Naive thymus-derived CD4-positive, alpha-beta T cell (primary cell): ENCODE measurements at regions of chr17 and their contacts with region 1.

Region 1: DNA sequence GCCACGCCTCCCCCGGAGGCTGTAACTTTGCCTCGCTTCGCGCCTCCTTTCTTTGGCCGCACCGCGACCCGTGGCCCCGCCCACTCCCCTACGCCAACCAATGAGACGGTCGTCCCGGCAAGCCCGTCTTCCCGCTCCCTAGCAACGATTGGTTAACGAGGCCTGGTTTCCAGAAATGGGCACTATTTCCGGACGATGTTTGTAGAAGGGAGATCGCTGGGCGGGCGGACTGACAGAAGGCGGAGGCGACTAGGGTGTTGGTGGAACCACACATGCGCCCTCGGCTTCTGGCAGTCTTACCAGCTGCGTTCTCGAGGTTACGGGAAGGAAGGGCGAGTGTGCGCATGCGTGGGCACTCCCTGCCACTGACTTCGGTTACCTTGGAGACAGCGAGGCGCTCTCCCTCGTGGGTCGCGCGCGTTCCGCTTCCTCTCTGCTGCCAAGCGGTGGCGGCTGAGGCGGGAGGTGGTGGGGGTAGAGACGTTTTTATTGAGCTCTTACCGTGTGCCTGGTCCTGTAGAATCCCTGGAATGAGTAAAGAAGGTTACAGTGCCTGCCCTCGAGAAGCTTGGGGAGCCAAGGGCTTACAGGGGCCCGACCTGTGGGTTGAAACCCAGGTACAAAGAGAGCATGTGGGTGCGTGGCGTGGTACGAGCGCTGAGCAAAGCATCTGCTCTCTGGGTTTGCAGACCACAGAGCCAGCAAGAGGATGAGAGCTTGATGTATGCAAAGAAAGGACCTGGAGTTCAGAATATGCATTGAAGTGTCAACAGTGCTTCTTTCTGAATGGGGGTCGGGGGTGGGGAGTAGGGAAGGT is 500 bp upstream of the MAP3K14 start:
- DNase-seq: peak; percentile 97 to 100 (median 100)
- ATAC-seq: peak; percentile 92
- H3K4me3 ChIP-seq: peak overlapping the region; percentile 80
- H3K4me3 Mint-ChIP-seq: peak overlapping the region; percentile 81 to 97 (median 92)
- H3K27ac ChIP-seq: peak overlapping the region; percentile 93
- H3K27ac Mint-ChIP-seq: peak overlapping the region; percentile 90 to 98 (median 95)
- H3K4me1 ChIP-seq: peaks cover 47 to 57% of the 10 kb centered on the region in 2 donors
- H3K4me1 Mint-ChIP-seq: peaks cover 60 to 88% (median 82%) of the 10 kb centered on the region in 7 donors
- H3K27me3 ChIP-seq: no peaks in the 10 kb centered on the region
- H3K27me3 Mint-ChIP-seq: peaks cover 0 to 4% (median 0%) of the 10 kb centered on the region in 5 donors

Region 2: GRCh38 chr17:44293509-44294226 is 1023.7 kb before region 1 on chr17:
- CTCF ChIA-PET with region 1: no interaction called
- POLR2A ChIA-PET with region 1: no interaction called
- intact Hi-C with region 1: no loop called
- DNase-seq: no peak
- ATAC-seq: no peak
- H3K4me3 ChIP-seq: no peak overlapping the region
- H3K4me3 Mint-ChIP-seq: no peak overlapping the region
- H3K27ac ChIP-seq: no peak overlapping the region
- H3K27ac Mint-ChIP-seq: no peak overlapping the region
- H3K4me1 ChIP-seq: no peaks in the 10 kb centered on the region
- H3K4me1 Mint-ChIP-seq: peaks cover 0 to 3% (median 0%) of the 10 kb centered on the region in 7 donors
- H3K27me3 ChIP-seq: no peaks in the 10 kb centered on the region
- H3K27me3 Mint-ChIP-seq: peaks cover 0 to 18% (median 0%) of the 10 kb centered on the region in 5 donors

Region 3: GRCh38 chr17:45051060-45051719 is 266.1 kb before region 1 on chr17 and contains the start of gene DCAKD:
- CTCF ChIA-PET with region 1: no interaction called
- POLR2A ChIA-PET with region 1: no interaction called
- intact Hi-C with region 1: loop called (anchors 2 to 5 kb)
- DNase-seq: peak; percentile 78 to 93 (median 84)
- ATAC-seq: peak; percentile 99
- H3K4me3 ChIP-seq: peak within 1 kb of the TSS; percentile 61
- H3K4me3 Mint-ChIP-seq: peak within 1 kb of the TSS; percentile 87 to 96 (median 90)
- H3K27ac ChIP-seq: peak within 1 kb of the TSS; percentile 91
- H3K27ac Mint-ChIP-seq: peak within 1 kb of the TSS; percentile 85 to 98 (median 96)
- H3K4me1 ChIP-seq: peaks cover 19 to 26% of the 10 kb centered on the region in 2 donors
- H3K4me1 Mint-ChIP-seq: peaks cover 11 to 54% (median 41%) of the 10 kb centered on the region in 7 donors
- H3K27me3 ChIP-seq: no peaks in the 10 kb centered on the region
- H3K27me3 Mint-ChIP-seq: no peaks in the 10 kb centered on the region
- total RNA-seq, gene DCAKD: 14.2 to 36.8 (median 29.8) TPM

Region 4: GRCh38 chr17:45218895-45219661 is 98.2 kb before region 1 on chr17:
- CTCF ChIA-PET with region 1: interaction called, 16 read pairs
- POLR2A ChIA-PET with region 1: interaction called, 35 read pairs
- intact Hi-C with region 1: loop called in 1 of 2 experiments (anchors 1 kb)
- DNase-seq: peak; percentile 74 to 89 (median 81)
- ATAC-seq: peak; percentile 74
- H3K4me3 ChIP-seq: peak overlapping the region; percentile 72
- H3K4me3 Mint-ChIP-seq: peak overlapping the region; percentile 81 to 99 (median 90)
- H3K27ac ChIP-seq: peak overlapping the region; percentile 96
- H3K27ac Mint-ChIP-seq: peak overlapping the region; percentile 37 to 94 (median 87)
- H3K4me1 ChIP-seq: peaks cover 24 to 30% of the 10 kb centered on the region in 2 donors
- H3K4me1 Mint-ChIP-seq: peaks cover 29 to 52% (median 37%) of the 10 kb centered on the region in 7 donors
- H3K27me3 ChIP-seq: no peaks in the 10 kb centered on the region
- H3K27me3 Mint-ChIP-seq: no peaks in the 10 kb centered on the region

Region 5: DNA sequence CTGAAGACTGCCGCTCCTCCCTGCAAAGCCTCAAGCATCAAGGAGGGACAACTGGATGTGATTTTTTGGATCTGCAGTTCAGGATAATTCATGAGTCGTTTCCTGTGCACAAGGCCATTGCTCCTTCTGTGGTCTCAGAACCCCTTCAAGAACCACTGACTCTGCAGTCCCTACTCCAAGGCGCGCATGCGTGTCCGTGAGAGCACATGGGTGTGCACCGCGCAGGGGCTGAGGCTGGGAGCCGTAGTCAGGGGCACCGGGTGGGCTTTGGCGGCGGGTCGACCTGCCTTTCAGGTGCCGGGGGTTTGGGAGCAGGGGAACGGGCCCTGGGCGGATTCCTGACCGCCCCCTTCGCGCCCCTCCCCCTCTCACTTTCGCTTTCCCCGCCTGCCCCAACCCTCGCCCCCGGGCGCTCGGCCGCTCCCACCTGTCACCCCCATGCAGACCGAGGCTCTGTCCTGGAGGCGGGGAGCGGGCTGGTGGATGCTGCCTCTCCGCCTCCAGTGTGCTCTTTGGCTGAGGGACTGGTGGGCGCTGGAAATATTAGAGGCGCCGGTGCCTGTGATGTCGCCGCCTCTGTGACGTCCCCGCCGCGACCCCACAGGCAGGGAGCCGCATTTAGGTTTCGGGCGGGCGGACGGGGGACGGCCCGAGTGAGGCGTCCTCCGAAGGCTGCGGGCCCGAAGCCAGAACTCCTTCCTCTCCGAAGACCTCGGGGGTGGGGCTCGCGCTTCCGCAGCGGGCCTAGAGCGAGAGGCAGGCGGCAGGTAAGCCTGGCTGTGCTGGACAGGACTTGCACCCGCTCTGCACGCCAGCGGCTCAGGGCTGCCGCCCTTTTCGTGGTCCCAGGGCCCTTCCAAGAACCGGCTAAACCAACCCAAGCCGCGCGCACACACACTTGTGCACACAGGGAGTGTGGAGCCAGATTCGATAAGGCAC is 55.5 kb before region 1 on chr17 and contains the start of gene SPATA32:
- CTCF ChIA-PET with region 1: no interaction called
- POLR2A ChIA-PET with region 1: interaction called, 5 read pairs
- intact Hi-C with region 1: loop called in 1 of 2 experiments (anchors 5 kb)
- DNase-seq: peak; percentile 45 to 69 (median 66)
- ATAC-seq: peak; percentile 83
- H3K4me3 ChIP-seq: peak within 1 kb of the TSS; percentile 52
- H3K4me3 Mint-ChIP-seq: peak within 1 kb of the TSS; percentile 77 to 89 (median 84)
- H3K27ac ChIP-seq: peak within 1 kb of the TSS; percentile 85
- H3K27ac Mint-ChIP-seq: peak within 1 kb of the TSS; percentile 58 to 93 (median 86)
- H3K4me1 ChIP-seq: peaks cover 10 to 31% of the 10 kb centered on the region in 2 donors
- H3K4me1 Mint-ChIP-seq: peaks cover 22 to 55% (median 45%) of the 10 kb centered on the region in 7 donors
- H3K27me3 ChIP-seq: no peaks in the 10 kb centered on the region
- H3K27me3 Mint-ChIP-seq: no peaks in the 10 kb centered on the region
- total RNA-seq, gene SPATA32: 0.12 to 1.1 (median 0.58) TPM in 4 of 5 experiments, not detected in the other

Region 6: DNA sequence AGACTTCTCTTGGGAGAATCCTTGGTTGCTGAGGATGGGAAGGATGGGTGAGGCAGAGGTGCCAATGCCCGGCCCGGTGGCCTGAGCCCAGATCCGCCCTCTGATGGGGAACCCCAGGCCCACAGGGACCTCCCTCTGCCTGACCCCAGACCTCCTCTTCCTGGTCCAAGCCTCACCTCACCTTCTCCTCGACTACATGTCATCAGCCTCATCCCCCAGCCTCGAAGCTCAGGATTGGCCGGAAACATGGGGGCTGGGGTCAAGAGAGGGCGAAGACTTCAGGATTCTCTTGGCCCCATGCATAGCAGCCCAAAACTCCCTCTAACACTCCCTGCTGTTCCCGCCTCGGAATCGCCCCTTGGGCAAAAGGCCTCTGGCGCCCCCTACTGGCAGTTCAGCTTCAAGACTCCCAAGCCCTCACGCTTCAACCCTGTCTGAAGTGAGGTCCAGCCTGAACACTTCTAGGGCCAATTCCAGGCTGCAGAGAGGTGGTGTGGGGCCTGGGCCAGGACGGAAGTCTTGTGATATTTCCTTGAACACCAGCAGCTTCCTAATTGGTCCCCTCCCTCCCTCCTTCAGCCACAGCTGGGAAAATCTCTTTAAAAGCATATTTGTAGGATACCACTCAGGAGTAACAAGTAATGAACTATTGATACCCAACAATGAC is 68.1 kb after region 1 on chr17:
- CTCF ChIA-PET with region 1: interaction called, 13 read pairs
- POLR2A ChIA-PET with region 1: interaction called, 9 read pairs
- intact Hi-C with region 1: loop called (anchors 1 to 2 kb)
- DNase-seq: peak; percentile 70 to 92 (median 85)
- ATAC-seq: peak; percentile 96
- H3K4me3 ChIP-seq: no peak overlapping the region
- H3K4me3 Mint-ChIP-seq: peak overlapping the region in 1 of 10 donors; percentile 37
- H3K27ac ChIP-seq: no peak overlapping the region
- H3K27ac Mint-ChIP-seq: peak overlapping the region in 3 of 9 donors; percentile 2 to 91 (median 58)
- H3K4me1 ChIP-seq: peaks cover 0 to 10% of the 10 kb centered on the region in 2 donors
- H3K4me1 Mint-ChIP-seq: peaks cover 11 to 23% (median 15%) of the 10 kb centered on the region in 7 donors
- H3K27me3 ChIP-seq: no peaks in the 10 kb centered on the region
- H3K27me3 Mint-ChIP-seq: peaks cover 0 to 14% (median 5%) of the 10 kb centered on the region in 5 donors

Region 7: DNA sequence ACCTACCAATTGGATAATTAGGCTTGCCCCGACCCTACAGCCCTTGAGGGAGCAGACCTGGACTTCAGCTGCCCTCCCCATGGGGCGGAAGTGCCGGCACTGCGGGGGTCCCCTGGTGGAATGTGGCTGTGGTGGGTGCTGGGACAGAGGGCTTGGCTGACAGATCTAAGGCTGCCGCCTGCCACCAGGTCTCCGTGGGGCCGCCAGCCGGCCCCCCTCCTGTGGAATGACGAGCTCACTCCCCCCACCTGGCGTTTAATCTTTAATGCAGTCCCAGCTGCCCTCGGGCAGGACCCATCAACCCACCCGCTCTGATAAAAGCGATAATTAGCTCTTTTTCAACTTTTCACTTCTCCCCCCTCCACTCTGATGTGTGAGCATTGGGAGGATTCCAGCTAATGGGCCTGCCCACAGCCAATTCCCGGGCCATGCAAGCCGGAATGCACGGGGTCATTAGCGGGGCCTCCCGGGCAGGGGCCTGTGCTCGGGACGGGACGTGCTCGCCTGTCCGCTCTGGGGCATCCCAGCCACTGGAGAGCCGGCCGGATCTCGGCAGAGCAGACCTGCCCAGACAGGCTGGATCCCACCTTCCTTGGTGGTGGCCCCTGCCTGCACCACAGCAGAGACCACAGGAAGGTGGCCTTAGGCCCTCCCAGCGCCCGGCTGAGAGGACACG is 1577.3 kb after region 1 on chr17:
- CTCF ChIA-PET with region 1: no interaction called
- POLR2A ChIA-PET with region 1: no interaction called
- intact Hi-C with region 1: no loop called
- DNase-seq: no peak
- ATAC-seq: no peak
- H3K4me3 ChIP-seq: no peak overlapping the region
- H3K4me3 Mint-ChIP-seq: no peak overlapping the region
- H3K27ac ChIP-seq: no peak overlapping the region
- H3K27ac Mint-ChIP-seq: no peak overlapping the region
- H3K4me1 ChIP-seq: no peaks in the 10 kb centered on the region
- H3K4me1 Mint-ChIP-seq: no peaks in the 10 kb centered on the region
- H3K27me3 ChIP-seq: no peaks in the 10 kb centered on the region
- H3K27me3 Mint-ChIP-seq: peaks cover 5 to 34% (median 17%) of the 10 kb centered on the region in 5 donors